Psoas muscle (tissue), 8 donors: ENCODE measurements at regions of chr2 and their contacts with region 1.

Region 1: GRCh38 chr2:86068136-86068588 is 37.5 kb downstream of the POLR1A start:
- DNase-seq: peak; percentile 65 to 90
- ATAC-seq: peak; percentile 89 to 94 (median 90)
- H3K4me3 ChIP-seq: no peak overlapping the region
- H3K27ac ChIP-seq: peak overlapping the region; percentile 91
- H3K4me1 ChIP-seq: peaks cover 52% of the 10 kb centered on the region
- H3K27me3 ChIP-seq: no peaks in the 10 kb centered on the region
- CTCF ChIP-seq: no peak

Region 2: DNA sequence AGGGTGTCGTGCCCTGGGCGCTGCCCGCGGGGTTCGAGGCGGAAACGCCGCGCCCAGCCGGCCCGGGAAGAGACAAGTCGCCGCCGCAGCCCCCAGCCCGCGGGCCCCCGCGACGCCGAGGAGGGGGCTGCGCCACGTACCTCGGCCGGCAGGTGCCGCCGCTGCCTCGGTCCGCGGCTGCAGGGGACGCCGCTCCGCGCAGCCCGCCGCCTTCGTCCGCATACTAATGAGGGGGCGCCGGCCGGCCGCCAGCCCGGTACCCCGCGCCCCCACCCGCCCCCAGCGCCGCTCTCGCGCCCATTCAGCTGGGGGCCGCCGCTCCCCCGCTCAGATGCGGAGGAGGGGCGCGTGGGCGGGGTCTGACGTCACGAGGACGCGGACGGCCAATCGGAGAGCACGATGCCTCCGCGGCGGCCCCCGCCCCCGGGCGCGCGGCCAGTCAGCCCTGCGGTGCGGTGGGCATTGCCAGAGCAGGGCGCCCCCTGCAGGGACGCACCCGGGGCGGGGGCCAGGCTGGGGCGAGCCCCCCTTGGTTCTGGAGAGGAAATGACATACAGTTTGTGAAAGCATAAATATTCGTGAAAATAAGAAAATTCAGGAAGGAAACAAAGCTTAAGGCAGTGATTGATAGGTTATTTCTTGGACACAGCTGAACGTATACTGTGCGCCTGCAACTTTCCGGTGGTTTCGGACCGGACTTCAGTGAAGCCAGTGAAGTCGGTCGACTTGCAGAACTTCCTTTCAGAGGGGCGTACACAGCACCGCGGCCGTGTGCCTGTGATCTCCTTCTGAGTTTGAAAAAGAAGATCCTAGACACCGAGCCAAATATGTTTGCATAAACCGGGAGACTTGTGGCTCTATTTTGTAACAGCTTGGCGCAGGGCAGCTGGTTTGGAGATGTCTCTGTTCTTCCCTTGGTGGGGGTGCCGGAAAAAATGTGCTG is 179.2 kb before region 1 on chr2 and contains the start of gene ST3GAL5:
- intact Hi-C with region 1: loop called in 1 of 2 experiments (anchors 2 kb)
- DNase-seq: peak; percentile 92 to 96
- ATAC-seq: peak; percentile 80 to 88 (median 86)
- H3K4me3 ChIP-seq: peak within 1 kb of the TSS; percentile 77
- H3K27ac ChIP-seq: peak within 1 kb of the TSS; percentile 96
- H3K4me1 ChIP-seq: peaks cover 32% of the 10 kb centered on the region
- H3K27me3 ChIP-seq: no peaks in the 10 kb centered on the region
- CTCF ChIP-seq: peak; percentile 61
- total RNA-seq, gene ST3GAL5: 7.9 to 19.5 (median 12.4) TPM

Region 3: GRCh38 chr2:86015006-86015405 is 53.2 kb before region 1 on chr2:
- intact Hi-C with region 1: loop called in 1 of 2 experiments (anchors 2 kb)
- DNase-seq: peak in 1 of 2 donors; percentile 17
- ATAC-seq: no peak
- H3K4me3 ChIP-seq: no peak overlapping the region
- H3K27ac ChIP-seq: no peak overlapping the region
- H3K4me1 ChIP-seq: peaks cover 21% of the 10 kb centered on the region
- H3K27me3 ChIP-seq: no peaks in the 10 kb centered on the region
- CTCF ChIP-seq: no peak

Region 4: GRCh38 chr2:86035883-86036668 is 32.1 kb before region 1 on chr2:
- intact Hi-C with region 1: loop called in 1 of 2 experiments (anchors 2 kb)
- DNase-seq: peak; percentile 79 to 91
- ATAC-seq: peak; percentile 82 to 86 (median 84)
- H3K4me3 ChIP-seq: no peak overlapping the region
- H3K27ac ChIP-seq: peak overlapping the region; percentile 96
- H3K4me1 ChIP-seq: peaks cover 60% of the 10 kb centered on the region
- H3K27me3 ChIP-seq: no peaks in the 10 kb centered on the region
- CTCF ChIP-seq: peak; percentile 42